PC-9 (cell line): ENCODE measurements at regions of chr3 and their contacts with region 1.

Region 1: GRCh38 chr3:184298759-184299496 is at the start of gene PSMD2:
- DNase-seq: peak; percentile 92 to 99
- H3K4me3 ChIP-seq: peak within 1 kb of the TSS; percentile 100
- H3K27ac ChIP-seq: peak within 1 kb of the TSS; percentile 57
- H3K4me1 ChIP-seq: peaks cover 15% of the 10 kb centered on the region
- H3K27me3 ChIP-seq: no peaks in the 10 kb centered on the region
- CTCF ChIP-seq: no peak
- total RNA-seq, gene PSMD2: 521 and 788 TPM in 2 replicates

Region 2: DNA sequence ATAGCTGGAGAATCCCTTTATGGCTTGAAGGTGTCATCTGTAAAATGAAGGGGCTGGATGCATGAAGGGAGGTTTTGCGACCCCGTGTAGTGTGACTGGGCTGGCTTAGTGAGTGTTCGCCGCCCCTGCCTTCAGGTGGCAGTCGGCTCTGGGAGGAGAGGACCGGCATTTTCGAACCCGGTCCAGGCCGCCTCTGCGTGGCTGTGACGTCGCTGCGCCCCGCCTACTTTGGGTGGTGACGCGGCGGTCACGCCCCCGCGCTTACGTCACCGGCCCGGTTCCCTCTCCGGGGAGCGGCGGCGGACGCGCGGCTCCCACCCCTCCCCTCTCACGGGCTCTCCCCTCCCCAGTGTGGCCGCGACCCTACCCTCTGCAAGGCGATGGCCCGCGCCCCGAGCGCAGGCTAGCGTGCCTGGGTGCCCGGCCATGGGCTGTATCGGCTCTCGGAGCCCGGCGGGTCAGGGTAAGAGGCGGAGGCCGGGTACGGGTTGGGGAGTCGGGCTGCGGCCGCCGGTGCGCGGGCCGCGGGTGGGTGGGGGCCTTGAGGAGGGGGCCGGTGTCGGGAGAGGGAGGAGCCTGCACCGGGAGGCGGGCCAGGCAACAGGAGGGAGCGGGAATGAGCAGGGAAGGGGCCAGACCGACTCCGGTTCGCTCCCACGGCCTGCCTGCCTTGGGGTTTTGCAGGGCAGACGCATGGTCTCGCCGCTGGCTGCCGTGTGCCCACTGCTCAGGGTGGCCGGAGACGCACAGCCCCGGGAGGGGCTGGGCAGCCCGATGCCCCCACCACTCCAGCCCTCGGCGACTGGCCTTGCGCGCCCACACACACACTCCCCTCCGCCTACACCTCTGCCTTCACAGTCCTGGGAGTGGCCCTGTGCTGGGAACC is 37.0 kb after region 1 on chr3:
- CTCF ChIA-PET with region 1: no interaction called
- POLR2A ChIA-PET with region 1: no interaction called
- intact Hi-C with region 1: loop called (anchors 2 kb)
- DNase-seq: peak; percentile 53 to 89
- H3K4me3 ChIP-seq: peak overlapping the region; percentile 68
- H3K27ac ChIP-seq: peak overlapping the region; percentile 73
- H3K4me1 ChIP-seq: peaks cover 55% of the 10 kb centered on the region
- H3K27me3 ChIP-seq: no peaks in the 10 kb centered on the region
- CTCF ChIP-seq: no peak